ENCODE measurements at regions of chr2 and their contacts with region 1.

Region 1: GRCh38 chr2:234500394-234501006 is 3.6 kb upstream of the ARL4C start:
- DNase-seq: peak; percentile 27 to 48
- ATAC-seq: peak in 6 of 8 donors; percentile 23 to 69 (median 54)
- H3K4me3 ChIP-seq: no peak overlapping the region
- H3K27ac ChIP-seq: no peak overlapping the region
- H3K4me1 ChIP-seq: peaks cover 2 to 21% (median 9%) of the 10 kb centered on the region in 9 donors
- H3K27me3 ChIP-seq: peaks cover 0 to 19% (median 5%) of the 10 kb centered on the region in 7 donors
- CTCF ChIP-seq: peak; percentile 31 to 78 (median 64)

Region 2: DNA sequence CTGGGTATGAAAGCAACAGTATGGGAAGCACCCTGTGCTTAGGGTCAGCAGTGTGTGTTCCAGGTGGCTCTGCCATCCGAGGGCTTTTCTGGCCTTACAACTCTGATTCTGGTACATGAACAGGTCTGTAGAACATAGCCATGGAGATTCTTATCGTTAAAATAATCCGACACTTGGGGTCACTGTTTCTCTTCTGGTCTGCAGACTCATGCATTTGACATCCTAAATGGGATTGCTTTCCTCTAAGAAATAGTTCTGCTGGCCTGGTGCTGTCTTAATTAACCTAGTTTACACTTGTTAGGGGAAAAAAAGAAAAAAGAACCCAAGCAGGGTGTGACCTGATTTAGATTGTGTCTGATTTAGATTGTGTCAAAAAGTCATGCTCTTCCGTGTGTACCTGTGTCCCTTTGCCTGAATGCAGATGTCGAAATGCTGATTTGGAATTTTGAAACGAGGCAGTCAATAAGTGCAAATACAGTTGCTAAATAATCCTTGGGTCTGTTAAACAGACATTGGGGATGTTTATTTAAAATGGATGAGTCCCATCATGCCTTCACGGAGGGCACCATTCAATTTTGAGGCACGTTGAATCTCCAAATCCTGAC is 523.7 kb before region 1 on chr2:
- intact Hi-C with region 1: loop called in 2 of 10 experiments (anchors 10 kb)
- DNase-seq: no peak
- ATAC-seq: no peak
- H3K4me3 ChIP-seq: no peak overlapping the region
- H3K27ac ChIP-seq: no peak overlapping the region
- H3K4me1 ChIP-seq: peaks cover 0 to 17% (median 0%) of the 10 kb centered on the region in 9 donors
- H3K27me3 ChIP-seq: peaks cover 0 to 50% (median 42%) of the 10 kb centered on the region in 7 donors
- CTCF ChIP-seq: peak in 6 of 9 donors; percentile 17 to 48 (median 38)

Region 3: GRCh38 chr2:234288974-234289455 is 211.5 kb before region 1 on chr2:
- intact Hi-C with region 1: loop called (anchors 1 to 5 kb)
- DNase-seq: peak; percentile 49 to 71
- ATAC-seq: peak in 5 of 8 donors; percentile 32 to 64 (median 43)
- H3K4me3 ChIP-seq: no peak overlapping the region
- H3K27ac ChIP-seq: peak overlapping the region in 1 of 10 donors; percentile 90
- H3K4me1 ChIP-seq: peaks cover 0 to 64% (median 13%) of the 10 kb centered on the region in 9 donors
- H3K27me3 ChIP-seq: peaks cover 0 to 3% (median 0%) of the 10 kb centered on the region in 7 donors
- CTCF ChIP-seq: peak; percentile 48 to 86 (median 72)